Caco-2 (cell line): ENCODE measurements at regions of chr12 and their contacts with region 1.

Region 1: DNA sequence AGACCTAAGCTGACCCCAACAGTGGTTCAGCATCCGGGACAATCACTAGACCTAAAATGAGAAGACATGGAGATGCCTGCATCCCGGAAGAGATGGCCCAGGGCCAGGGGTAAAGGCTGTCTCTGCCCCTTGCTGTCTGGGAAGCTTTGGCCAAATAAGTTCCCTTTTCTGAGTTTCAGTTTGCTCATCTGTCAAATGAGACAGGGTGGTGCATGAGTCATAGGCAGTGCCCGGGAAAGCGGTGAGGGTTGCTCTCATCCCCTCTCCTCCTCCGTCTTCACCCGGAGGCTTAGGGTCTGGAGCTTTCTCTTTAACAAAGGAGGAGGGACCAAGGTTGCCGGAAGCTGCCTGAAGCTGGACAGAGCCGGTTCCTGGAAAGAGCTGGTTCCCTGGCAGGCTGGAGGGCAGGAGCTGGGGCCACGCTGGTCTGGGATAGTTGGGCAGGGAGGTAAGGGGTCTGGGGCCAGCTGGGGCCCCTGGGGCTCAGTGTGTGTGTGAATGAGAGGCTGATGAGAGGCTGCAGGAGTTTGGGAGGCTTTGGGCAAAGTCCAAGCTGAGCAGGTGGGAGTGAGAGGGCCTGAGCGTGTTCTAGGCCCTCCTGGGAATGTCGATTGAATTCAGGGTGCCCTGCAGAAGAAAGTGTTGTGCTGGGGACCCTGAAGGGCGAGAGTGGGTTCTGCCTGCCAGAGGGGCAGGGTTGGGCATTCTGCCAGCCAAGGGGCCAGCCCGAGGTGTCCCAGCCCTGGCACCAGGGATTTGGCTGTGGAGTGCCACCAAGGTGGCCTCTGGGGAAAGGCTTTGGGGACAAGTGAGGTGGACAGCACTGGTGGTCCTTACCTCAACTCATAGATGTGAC is at the start of gene SDSL:
- DNase-seq: peak; percentile 49 to 66
- H3K4me3 ChIP-seq: peak within 1 kb of the TSS; percentile 33
- H3K4me3 Mint-ChIP-seq: peak within 1 kb of the TSS; percentile 84
- H3K27ac Mint-ChIP-seq: peak within 1 kb of the TSS; percentile 75
- H3K4me1 ChIP-seq: peaks cover 27% of the 10 kb centered on the region
- H3K4me1 Mint-ChIP-seq: peaks cover 7% of the 10 kb centered on the region
- H3K27me3 ChIP-seq: no peaks in the 10 kb centered on the region
- H3K27me3 Mint-ChIP-seq: no peaks in the 10 kb centered on the region
- CTCF ChIP-seq: no peak
- total RNA-seq, gene SDSL: 4.0 and 4.5 TPM in 2 replicates

Region 2: GRCh38 chr12:112725391-112725790 is 696.9 kb before region 1 on chr12:
- CTCF ChIA-PET with region 1: no interaction called
- POLR2A ChIA-PET with region 1: no interaction called
- intact Hi-C with region 1: no loop called
- DNase-seq: no peak
- H3K4me3 ChIP-seq: no peak overlapping the region
- H3K4me3 Mint-ChIP-seq: no peak overlapping the region
- H3K27ac Mint-ChIP-seq: no peak overlapping the region
- H3K4me1 ChIP-seq: no peaks in the 10 kb centered on the region
- H3K4me1 Mint-ChIP-seq: no peaks in the 10 kb centered on the region
- H3K27me3 ChIP-seq: no peaks in the 10 kb centered on the region
- H3K27me3 Mint-ChIP-seq: no peaks in the 10 kb centered on the region
- CTCF ChIP-seq: no peak

Region 3: GRCh38 chr12:113140706-113141105 is 281.6 kb before region 1 on chr12:
- CTCF ChIA-PET with region 1: interaction called, 12 read pairs
- POLR2A ChIA-PET with region 1: no interaction called
- intact Hi-C with region 1: no loop called
- DNase-seq: no peak
- H3K4me3 ChIP-seq: no peak overlapping the region
- H3K4me3 Mint-ChIP-seq: no peak overlapping the region
- H3K27ac Mint-ChIP-seq: no peak overlapping the region
- H3K4me1 ChIP-seq: no peaks in the 10 kb centered on the region; the same call in 1 of the 2 replicates
- H3K4me1 Mint-ChIP-seq: no peaks in the 10 kb centered on the region
- H3K27me3 ChIP-seq: no peaks in the 10 kb centered on the region
- H3K27me3 Mint-ChIP-seq: no peaks in the 10 kb centered on the region
- CTCF ChIP-seq: no peak

Region 4: GRCh38 chr12:113310489-113310888 is 111.8 kb before region 1 on chr12:
- CTCF ChIA-PET with region 1: interaction called, 4 read pairs
- POLR2A ChIA-PET with region 1: no interaction called
- intact Hi-C with region 1: loop called (anchors 2 kb)
- DNase-seq: peak in 1 of 2 experiments; percentile 27
- H3K4me3 ChIP-seq: no peak overlapping the region
- H3K4me3 Mint-ChIP-seq: no peak overlapping the region
- H3K27ac Mint-ChIP-seq: no peak overlapping the region
- H3K4me1 ChIP-seq: no peaks in the 10 kb centered on the region
- H3K4me1 Mint-ChIP-seq: no peaks in the 10 kb centered on the region
- H3K27me3 ChIP-seq: no peaks in the 10 kb centered on the region
- H3K27me3 Mint-ChIP-seq: no peaks in the 10 kb centered on the region
- CTCF ChIP-seq: no peak